Activated naive CD4-positive, alpha-beta T cell treated with anti-CD3 and anti-CD28 coated beads for 36 hours (primary cell): ENCODE measurements at regions of chr10 and their contacts with region 1.

Region 1: GRCh38 chr10:78657163-78657861 is 411.5 kb upstream of the ZMIZ1 start:
- DNase-seq: peak; percentile 85
- H3K4me3 Mint-ChIP-seq: no peak overlapping the region
- H3K27ac Mint-ChIP-seq: no peak overlapping the region
- H3K4me1 Mint-ChIP-seq: no peaks in the 10 kb centered on the region
- H3K27me3 Mint-ChIP-seq: peaks cover 9% of the 10 kb centered on the region

Region 2: DNA sequence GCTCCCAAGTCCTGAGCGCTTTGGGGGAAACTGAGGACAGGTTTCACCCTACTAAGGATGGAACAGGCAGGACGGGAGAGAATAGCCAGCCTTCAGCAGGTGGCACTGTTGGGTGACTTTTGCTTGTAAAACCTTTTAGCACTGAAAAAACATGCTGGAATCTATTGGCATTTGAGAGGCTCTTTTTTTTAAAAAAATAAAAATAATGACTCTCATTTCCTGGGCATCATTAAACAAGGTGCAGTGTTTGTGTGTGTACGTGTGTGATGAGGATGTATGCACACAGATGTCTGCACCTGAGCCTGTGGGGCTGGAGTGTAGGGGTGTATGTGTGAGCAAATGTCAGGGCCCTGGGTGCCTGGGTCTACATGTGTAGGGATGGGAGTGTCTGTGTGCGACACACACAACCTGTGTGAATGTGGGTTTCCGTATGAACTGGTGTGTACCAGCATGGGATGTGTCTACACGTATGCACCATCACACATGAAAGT is 445.7 kb before region 1 on chr10:
- CTCF ChIA-PET with region 1: no interaction called
- intact Hi-C with region 1: loop called (anchors 2 kb)
- DNase-seq: peak; percentile 47
- H3K4me3 Mint-ChIP-seq: no peak overlapping the region
- H3K27ac Mint-ChIP-seq: no peak overlapping the region
- H3K4me1 Mint-ChIP-seq: peaks cover 1% of the 10 kb centered on the region
- H3K27me3 Mint-ChIP-seq: peaks cover 4% of the 10 kb centered on the region